SK-N-SH (cell line): ENCODE measurements at regions of chr1 and their contacts with region 1.

Region 1: DNA sequence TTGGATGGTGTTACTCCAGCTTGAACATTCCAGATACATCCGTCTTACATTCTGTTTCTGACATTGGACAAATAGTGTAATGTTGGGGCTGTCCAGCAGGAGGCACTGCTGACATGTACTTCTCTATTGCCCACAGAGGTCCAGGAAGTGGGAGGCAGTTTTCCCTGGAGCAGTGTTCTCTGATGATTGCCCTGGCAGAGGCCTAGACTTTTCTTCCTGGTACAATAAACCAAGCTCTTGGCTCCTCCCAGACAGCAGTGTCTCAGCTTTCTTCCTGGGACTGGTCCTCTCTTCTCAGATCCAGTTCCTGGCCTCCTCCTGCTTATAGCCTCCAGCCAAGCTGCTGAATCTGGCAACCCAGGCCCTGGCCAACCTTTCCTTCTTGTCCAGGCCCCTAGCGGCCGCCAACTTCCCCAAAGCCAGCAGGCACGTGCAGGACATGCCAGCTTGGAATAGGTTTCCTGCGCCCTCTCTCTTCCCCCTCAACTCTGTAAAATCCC is 14.9 kb upstream of the IFNLR1 start:
- DNase-seq: peak; percentile 77
- H3K4me3 ChIP-seq: no peak overlapping the region; a peak in 1 of 4 replicates
- H3K27ac ChIP-seq: no peak overlapping the region; a peak in 1 of 4 replicates
- H3K4me1 ChIP-seq: peaks cover 0 to 7% of the 10 kb centered on the region in 2 experiments; a peak in 1 of 4 replicates
- H3K27me3 ChIP-seq: no peaks in the 10 kb centered on the region
- CTCF ChIP-seq: peak; percentile 85
- EP300 ChIP-seq: no peak
- RAD21 ChIP-seq: peak; percentile 88

Region 2: GRCh38 chr1:24179251-24179840 is 22.6 kb before region 1 on chr1:
- CTCF ChIA-PET with region 1: interaction called, 25 read pairs
- POLR2A ChIA-PET with region 1: no interaction called
- DNase-seq: no peak
- H3K4me3 ChIP-seq: no peak overlapping the region
- H3K27ac ChIP-seq: no peak overlapping the region
- H3K4me1 ChIP-seq: no peaks in the 10 kb centered on the region
- H3K27me3 ChIP-seq: no peaks in the 10 kb centered on the region
- CTCF ChIP-seq: no peak
- EP300 ChIP-seq: no peak
- RAD21 ChIP-seq: no peak

Region 3: DNA sequence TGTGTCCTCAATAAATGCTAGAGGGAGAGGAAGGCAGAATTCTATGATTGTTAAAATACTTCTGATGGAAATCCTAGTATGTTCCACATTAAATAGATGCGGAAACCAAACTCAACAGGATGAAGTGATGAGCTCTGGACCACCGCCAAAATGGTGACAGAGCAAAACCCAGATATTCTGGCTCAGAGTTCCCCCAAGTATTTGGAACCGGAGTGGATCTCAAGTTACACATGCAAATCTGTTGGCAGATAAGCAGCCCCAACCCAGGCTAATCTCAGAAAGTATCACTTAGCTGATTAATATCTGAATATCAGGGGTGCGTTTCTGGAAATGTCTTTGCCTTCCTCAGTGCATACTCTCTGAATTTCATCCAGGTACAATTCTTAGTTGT is 99.8 kb after region 1 on chr1:
- CTCF ChIA-PET with region 1: interaction called, 12 read pairs
- POLR2A ChIA-PET with region 1: no interaction called
- DNase-seq: no peak
- H3K4me3 ChIP-seq: no peak overlapping the region
- H3K27ac ChIP-seq: no peak overlapping the region
- H3K4me1 ChIP-seq: peaks cover 0 to 7% of the 10 kb centered on the region in 2 experiments; a peak in 1 of 4 replicates
- H3K27me3 ChIP-seq: peaks cover 12% of the 10 kb centered on the region; the same call in 1 of the 2 replicates
- CTCF ChIP-seq: no peak
- EP300 ChIP-seq: no peak
- RAD21 ChIP-seq: no peak

Region 4: GRCh38 chr1:24374891-24375786 is 173.1 kb after region 1 on chr1:
- CTCF ChIA-PET with region 1: interaction called, 14 read pairs
- POLR2A ChIA-PET with region 1: no interaction called
- DNase-seq: no peak
- H3K4me3 ChIP-seq: no peak overlapping the region
- H3K27ac ChIP-seq: 0 out of 4 replicates have a peak overlapping the region, but pooled peaks of 1 of the 2 experiments have one; percentile 10
- H3K4me1 ChIP-seq: no peaks in the 10 kb centered on the region
- H3K27me3 ChIP-seq: no peaks in the 10 kb centered on the region
- CTCF ChIP-seq: no peak
- EP300 ChIP-seq: no peak
- RAD21 ChIP-seq: no peak

Region 5: GRCh38 chr1:24415334-24415909 is 213.4 kb after region 1 on chr1 and contains the start of gene NIPAL3:
- CTCF ChIA-PET with region 1: interaction called, 10 read pairs
- POLR2A ChIA-PET with region 1: interaction called, 4 read pairs
- DNase-seq: peak; percentile 91
- H3K4me3 ChIP-seq: peak within 1 kb of the TSS; percentile 66 to 91
- H3K27ac ChIP-seq: peak within 1 kb of the TSS in 1 of 2 experiments; percentile 82; a peak in 3 of 4 replicates
- H3K4me1 ChIP-seq: peaks cover 17 to 39% of the 10 kb centered on the region in 2 experiments
- H3K27me3 ChIP-seq: no peaks in the 10 kb centered on the region
- CTCF ChIP-seq: peak; percentile 66
- EP300 ChIP-seq: no peak
- RAD21 ChIP-seq: peak; percentile 58
- polyA plus RNA-seq, gene NIPAL3: 20.3 and 28.6 TPM in 2 replicates